ENCODE measurements at regions of chr17 and their contacts with region 1.

Region 1: DNA sequence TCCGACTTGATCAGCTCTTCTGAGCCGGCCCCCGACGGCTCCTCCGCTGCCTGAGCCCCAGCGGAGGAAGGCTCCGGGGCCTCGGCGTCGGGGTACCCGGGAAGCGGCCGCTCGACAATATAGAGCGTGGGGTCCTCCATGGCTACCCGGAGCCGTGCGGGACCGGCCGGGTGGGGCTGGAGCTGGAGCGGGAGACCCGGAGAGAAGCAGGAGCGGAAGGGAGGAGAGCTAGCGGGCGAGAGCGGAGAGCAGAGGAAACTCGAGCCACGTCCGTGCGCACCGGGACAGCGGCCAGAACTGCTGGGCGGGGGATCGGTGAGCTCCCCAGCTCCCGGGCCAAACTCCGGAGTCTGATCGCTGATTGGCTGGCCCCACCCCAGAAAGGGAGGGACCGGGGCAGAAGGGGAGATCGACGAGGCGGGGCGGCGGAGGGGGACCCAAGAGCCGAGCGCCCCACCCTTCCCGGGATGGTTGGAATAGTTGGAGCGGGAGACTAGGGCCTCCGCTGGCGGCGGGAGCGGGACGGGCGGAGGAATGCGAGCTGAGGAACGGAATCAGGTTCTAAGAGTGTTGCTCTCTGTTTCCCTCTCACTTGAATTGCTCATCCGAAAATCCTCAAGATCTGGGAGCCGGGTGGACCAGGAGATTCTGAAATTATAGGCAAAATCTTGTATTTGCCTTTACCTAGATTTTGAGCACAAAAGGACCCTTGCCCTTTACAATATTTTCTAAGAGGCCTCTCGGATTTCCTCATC is at the start of gene CAVIN1:
- DNase-seq: peak; percentile 98
- H3K4me3 ChIP-seq: peak within 1 kb of the TSS; percentile 76 to 92 (median 90)
- H3K27ac ChIP-seq: peak within 1 kb of the TSS; percentile 69
- H3K4me1 ChIP-seq: peaks cover 22% of the 10 kb centered on the region
- H3K27me3 ChIP-seq: no peaks in the 10 kb centered on the region
- CTCF ChIP-seq: no peak
- total RNA-seq, gene CAVIN1: 354 to 592 TPM

Region 2: DNA sequence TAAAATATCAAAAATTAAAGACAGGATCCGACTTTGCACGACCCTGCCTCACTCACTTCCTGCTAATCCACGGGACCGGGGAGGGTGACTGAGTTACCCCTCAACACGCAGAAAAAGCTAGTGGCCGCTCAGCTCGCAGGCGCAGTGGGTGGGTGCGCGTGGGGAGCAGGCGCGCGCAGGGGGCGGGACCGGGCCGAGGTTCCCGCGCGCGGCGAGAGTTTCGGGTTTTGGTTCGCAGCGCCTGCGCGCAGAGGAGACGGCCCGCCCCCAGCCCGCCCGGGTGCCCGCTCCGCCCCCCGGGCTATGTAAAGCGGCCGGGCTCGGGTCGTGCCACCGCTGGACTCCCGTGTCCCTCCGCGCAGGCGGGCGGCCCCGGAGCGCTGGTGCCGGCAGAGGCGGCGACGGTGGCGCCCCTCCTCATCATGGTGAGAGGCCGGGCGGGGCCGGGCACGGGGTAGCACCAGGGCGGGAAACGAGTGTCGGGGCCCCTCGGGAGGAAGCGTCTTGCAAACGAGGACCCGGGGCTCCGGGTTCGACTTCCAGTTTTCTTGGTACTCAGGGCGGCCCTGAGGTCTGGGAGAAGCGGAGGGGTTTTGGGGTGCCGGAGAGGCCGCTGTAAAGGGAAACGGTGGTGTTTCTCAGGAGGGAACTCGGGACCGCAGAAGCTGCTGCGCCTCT is 456.5 kb before region 1 on chr17 and contains the start of gene CNP:
- CTCF ChIA-PET with region 1: no interaction called
- dilution Hi-C with region 1: no loop called
- in situ Hi-C with region 1: no loop called
- intact Hi-C with region 1: loop called (anchors 5 kb)
- DNase-seq: peak; percentile 92
- H3K4me3 ChIP-seq: peak within 1 kb of the TSS; percentile 77 to 93 (median 80)
- H3K27ac ChIP-seq: peak within 1 kb of the TSS; percentile 82
- H3K4me1 ChIP-seq: peaks cover 25% of the 10 kb centered on the region
- H3K27me3 ChIP-seq: no peaks in the 10 kb centered on the region
- CTCF ChIP-seq: no peak
- total RNA-seq, gene CNP: 61.7 to 72.6 TPM

Region 3: GRCh38 chr17:42329025-42329976 is 93.8 kb before region 1 on chr17:
- CTCF ChIA-PET with region 1: no interaction called
- dilution Hi-C with region 1: no loop called
- in situ Hi-C with region 1: no loop called
- intact Hi-C with region 1: loop called (anchors 1 kb)
- DNase-seq: peak; percentile 90
- H3K4me3 ChIP-seq: no peak overlapping the region
- H3K27ac ChIP-seq: peak overlapping the region; percentile 88
- H3K4me1 ChIP-seq: peaks cover 37% of the 10 kb centered on the region
- H3K27me3 ChIP-seq: no peaks in the 10 kb centered on the region
- CTCF ChIP-seq: no peak

Region 4: GRCh38 chr17:42337442-42337841 is 85.7 kb before region 1 on chr17:
- CTCF ChIA-PET with region 1: no interaction called
- dilution Hi-C with region 1: loop called (anchors 5 kb)
- in situ Hi-C with region 1: no loop called
- intact Hi-C with region 1: no loop called
- DNase-seq: no peak
- H3K4me3 ChIP-seq: no peak overlapping the region
- H3K27ac ChIP-seq: no peak overlapping the region
- H3K4me1 ChIP-seq: no peaks in the 10 kb centered on the region
- H3K27me3 ChIP-seq: no peaks in the 10 kb centered on the region
- CTCF ChIP-seq: no peak

Region 5: DNA sequence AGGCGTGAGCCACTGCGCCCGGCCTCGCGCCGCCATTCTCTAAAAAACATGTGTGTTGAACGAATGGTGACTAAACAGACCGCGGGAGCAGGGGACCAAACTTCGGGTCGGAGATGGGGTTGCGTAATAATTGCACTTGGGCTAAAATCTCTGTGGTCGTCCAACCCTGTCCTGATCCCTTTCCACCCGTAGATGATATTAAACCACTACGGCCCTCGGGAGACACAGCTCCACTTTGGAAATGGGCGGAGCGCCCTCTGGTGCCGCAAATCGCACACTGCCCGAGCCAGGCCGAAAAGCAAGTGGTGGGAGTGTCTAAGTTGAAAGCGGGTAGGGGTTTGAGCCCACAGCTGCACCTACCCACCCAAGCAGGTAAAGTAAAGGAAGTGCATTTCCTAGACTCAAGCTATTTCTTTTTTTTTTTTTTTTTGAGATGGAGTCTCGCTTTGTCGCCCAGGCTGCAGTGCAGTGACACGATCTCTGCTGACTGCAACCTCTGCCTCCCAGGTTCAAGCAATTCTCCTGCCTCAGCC is 17.1 kb before region 1 on chr17:
- CTCF ChIA-PET with region 1: interaction called, 9 read pairs
- dilution Hi-C with region 1: no loop called
- in situ Hi-C with region 1: no loop called
- intact Hi-C with region 1: loop called (anchors 1 kb)
- DNase-seq: peak; percentile 26
- H3K4me3 ChIP-seq: no peak overlapping the region
- H3K27ac ChIP-seq: no peak overlapping the region
- H3K4me1 ChIP-seq: peaks cover 50% of the 10 kb centered on the region
- H3K27me3 ChIP-seq: no peaks in the 10 kb centered on the region
- CTCF ChIP-seq: peak; percentile 45 to 76

Region 6: GRCh38 chr17:42548070-42548837 is 125.1 kb after region 1 on chr17:
- CTCF ChIA-PET with region 1: no interaction called
- dilution Hi-C with region 1: no loop called
- in situ Hi-C with region 1: no loop called
- intact Hi-C with region 1: no loop called
- DNase-seq: no peak
- H3K4me3 ChIP-seq: peak overlapping the region; percentile 25 to 48 (median 43)
- H3K27ac ChIP-seq: no peak overlapping the region
- H3K4me1 ChIP-seq: peaks cover 9% of the 10 kb centered on the region
- H3K27me3 ChIP-seq: no peaks in the 10 kb centered on the region
- CTCF ChIP-seq: peak; percentile 44 to 70

Measured in mammary epithelial cell (primary cell).